ENCODE measurements at regions of chr6 and their contacts with region 1.

Region 1: DNA sequence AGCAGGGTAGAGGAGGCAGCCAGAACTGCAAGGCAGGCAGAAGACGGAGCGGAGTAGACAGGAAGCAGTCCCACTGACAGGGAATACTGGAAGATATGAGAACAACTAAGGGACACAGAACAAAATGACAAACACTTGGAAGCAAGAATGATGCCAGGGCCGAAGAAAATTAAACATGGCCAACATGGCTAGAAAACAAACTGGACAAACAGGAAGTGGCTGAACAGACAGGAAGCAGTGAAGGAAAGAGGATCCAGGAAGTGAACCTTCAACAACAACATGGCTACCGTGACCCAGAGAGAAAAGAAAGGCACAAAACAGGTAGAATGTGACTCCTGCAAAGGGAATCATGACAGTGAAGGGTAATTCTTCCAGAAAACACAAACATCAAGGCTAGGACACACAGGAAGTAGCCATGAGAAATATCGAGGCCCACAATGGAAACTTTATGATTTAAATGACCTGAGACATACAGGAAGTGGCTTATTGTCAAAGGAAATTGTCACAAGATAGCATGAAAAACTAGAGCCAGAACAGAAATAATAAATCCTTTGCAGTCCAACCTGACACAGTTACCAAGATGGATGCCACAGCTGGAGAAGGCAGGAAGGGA is 9.1 kb downstream of the COL11A2 start:
- DNase-seq: no peak
- ATAC-seq: peak; percentile 55
- H3K4me3 Mint-ChIP-seq: peak overlapping the region; percentile 35
- H3K27ac Mint-ChIP-seq: peak overlapping the region; percentile 96
- H3K4me1 Mint-ChIP-seq: peaks cover 18% of the 10 kb centered on the region
- H3K27me3 Mint-ChIP-seq: peaks cover 14% of the 10 kb centered on the region

Region 2: GRCh38 chr6:33105916-33106871 is 77.0 kb before region 1 on chr6:
- CTCF ChIA-PET with region 1: no interaction called
- DNase-seq: no peak
- ATAC-seq: no peak
- H3K4me3 Mint-ChIP-seq: no peak overlapping the region
- H3K27ac Mint-ChIP-seq: no peak overlapping the region
- H3K4me1 Mint-ChIP-seq: no peaks in the 10 kb centered on the region
- H3K27me3 Mint-ChIP-seq: peaks cover 81% of the 10 kb centered on the region

Region 3: GRCh38 chr6:33200219-33201146 is 17.3 kb after region 1 on chr6 and contains the starts of genes RXRB and SLC39A7:
- CTCF ChIA-PET with region 1: interaction called, 16 read pairs
- DNase-seq: peak; percentile 100
- ATAC-seq: peak; percentile 70
- H3K4me3 Mint-ChIP-seq: peak within 1 kb of the TSS; percentile 99
- H3K27ac Mint-ChIP-seq: peak within 1 kb of the TSS; percentile 97
- H3K4me1 Mint-ChIP-seq: peaks cover 66% of the 10 kb centered on the region
- H3K27me3 Mint-ChIP-seq: no peaks in the 10 kb centered on the region
- total RNA-seq, gene RXRB: 36.0 to 38.9 TPM
- total RNA-seq, gene SLC39A7: 50.1 to 63.9 TPM

Region 4: GRCh38 chr6:33237741-33238140 is 54.6 kb after region 1 on chr6:
- CTCF ChIA-PET with region 1: no interaction called
- DNase-seq: no peak
- ATAC-seq: no peak
- H3K4me3 Mint-ChIP-seq: no peak overlapping the region
- H3K27ac Mint-ChIP-seq: no peak overlapping the region
- H3K4me1 Mint-ChIP-seq: peaks cover 12% of the 10 kb centered on the region
- H3K27me3 Mint-ChIP-seq: peaks cover 48% of the 10 kb centered on the region